GM12878 (cell line): ENCODE measurements at regions of chr6 and their contacts with region 1.

Region 1: GRCh38 chr6:3324262-3324942 is 65.7 kb downstream of the PSMG4 start:
- DNase-seq: peak; percentile 48
- ATAC-seq: peak; percentile 98
- H3K4me3 ChIP-seq: no peak overlapping the region
- H3K27ac ChIP-seq: no peak overlapping the region
- H3K4me1 ChIP-seq: no peaks in the 10 kb centered on the region; the same call in 1 of the 2 replicates
- H3K27me3 ChIP-seq: no peaks in the 10 kb centered on the region; a peak in 1 of 4 replicates
- CTCF ChIP-seq: no peak
- EP300 ChIP-seq: peak; percentile 57 to 64; a peak in 3 of 4 replicates
- POLR2A ChIP-seq: no peak
- RAD21 ChIP-seq: no peak

Region 2: GRCh38 chr6:3337521-3338350 is 13.3 kb after region 1 on chr6:
- CTCF ChIA-PET with region 1: interaction called, 11 read pairs
- POLR2A ChIA-PET with region 1: interaction called, 10 read pairs
- RAD21 ChIA-PET with region 1: interaction called, 24 read pairs
- SMC1A ChIA-PET with region 1: interaction called, 41 read pairs
- in situ Hi-C with region 1: no loop called
- intact Hi-C with region 1: no loop called
- DNase-seq: no peak
- ATAC-seq: peak; percentile 47
- H3K4me3 ChIP-seq: peak overlapping the region; percentile 25; the same call in 1 of the 2 replicates
- H3K27ac ChIP-seq: peak overlapping the region; percentile 5; the same call in 1 of the 2 replicates
- H3K4me1 ChIP-seq: peaks cover 25% of the 10 kb centered on the region
- H3K27me3 ChIP-seq: no peaks in the 10 kb centered on the region
- CTCF ChIP-seq: peak in 2 of 3 experiments; percentile 15 to 16; a peak in 2 of 6 replicates
- EP300 ChIP-seq: peak in 1 of 2 experiments; percentile 17; a peak in 1 of 4 replicates
- POLR2A ChIP-seq: no peak
- RAD21 ChIP-seq: no peak

Region 3: DNA sequence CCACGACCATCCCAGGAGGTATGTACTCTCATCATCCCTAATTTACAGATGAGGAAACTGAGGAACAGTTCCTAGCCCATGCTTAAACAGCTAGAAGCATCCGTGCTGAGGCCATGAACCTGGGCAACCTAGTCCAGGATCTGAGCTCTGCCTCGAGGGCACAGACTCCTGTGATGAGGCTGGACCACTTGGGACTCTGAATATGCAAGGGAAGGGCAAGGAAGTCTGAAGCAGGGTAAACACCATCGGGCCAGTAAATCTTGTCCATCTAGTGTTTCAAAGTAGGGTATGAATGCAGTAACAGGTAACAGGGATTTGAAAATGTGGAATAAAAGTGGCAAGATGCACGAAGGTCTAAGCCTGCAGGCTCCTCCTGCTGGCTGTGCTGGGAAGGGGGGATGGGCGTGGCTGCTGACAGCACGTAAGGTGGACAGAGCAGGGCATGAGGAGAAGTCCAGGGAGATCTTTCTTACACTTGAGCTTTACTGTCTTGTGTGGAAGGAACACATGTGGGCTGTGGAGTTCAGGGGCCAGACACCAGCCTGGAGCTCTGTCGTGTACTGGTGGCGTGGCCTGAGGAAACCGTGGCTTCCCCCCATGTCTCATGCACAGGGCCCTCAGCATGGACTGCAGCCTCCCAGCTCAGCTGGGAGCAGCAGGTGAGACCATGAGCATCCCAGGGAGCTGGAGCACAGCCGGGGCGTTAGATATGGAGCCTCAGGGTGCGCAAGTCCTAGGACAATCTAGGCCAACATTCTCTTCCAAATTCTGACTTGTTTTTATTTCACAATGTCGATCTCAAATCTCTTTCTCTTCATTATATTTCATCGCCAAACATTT is 47.8 kb after region 1 on chr6:
- CTCF ChIA-PET with region 1: interaction called, 3 read pairs
- POLR2A ChIA-PET with region 1: no interaction called
- RAD21 ChIA-PET with region 1: interaction called, 5 read pairs
- SMC1A ChIA-PET with region 1: interaction called, 11 read pairs
- in situ Hi-C with region 1: no loop called
- intact Hi-C with region 1: no loop called
- DNase-seq: no peak
- ATAC-seq: no peak
- H3K4me3 ChIP-seq: no peak overlapping the region
- H3K27ac ChIP-seq: no peak overlapping the region
- H3K4me1 ChIP-seq: peaks cover 6% of the 10 kb centered on the region; the same call in 1 of the 2 replicates
- H3K27me3 ChIP-seq: no peaks in the 10 kb centered on the region
- CTCF ChIP-seq: peak in 2 of 3 experiments; percentile 3 to 9; a peak in 1 of 6 replicates
- EP300 ChIP-seq: no peak
- POLR2A ChIP-seq: no peak
- RAD21 ChIP-seq: no peak